Transverse colon (tissue), 4 donors: ENCODE measurements at regions of chr2 and their contacts with region 1.

Region 1: DNA sequence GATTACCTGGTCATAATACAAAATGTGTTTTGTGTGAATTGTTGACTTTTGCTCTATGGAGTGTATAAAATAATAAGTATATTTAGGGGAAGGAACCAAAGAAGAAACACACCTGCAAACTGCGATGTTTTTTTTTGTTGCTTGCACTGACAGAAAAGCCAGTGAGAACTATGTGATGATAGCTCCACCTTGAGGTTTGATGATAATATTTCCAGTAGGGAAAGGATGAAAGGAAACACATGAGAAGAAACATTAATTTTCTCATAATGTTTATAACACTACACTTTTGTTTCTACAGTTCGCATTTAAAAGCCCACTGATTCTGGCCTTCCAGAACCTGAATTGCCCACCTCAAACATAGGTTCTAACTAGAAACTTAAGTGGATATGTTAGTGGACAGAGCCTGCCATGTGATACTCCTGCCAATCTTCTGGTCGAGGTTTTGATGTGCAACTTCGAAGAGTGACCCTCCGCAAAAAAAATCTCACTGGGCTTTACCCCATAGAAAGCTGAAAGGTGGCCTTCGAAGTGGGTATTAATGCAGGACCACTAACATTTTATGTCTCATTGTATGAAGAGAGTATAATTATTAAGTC is 476.4 kb upstream of the SPHKAP start:
- DNase-seq: no peak
- H3K4me3 ChIP-seq: no peak overlapping the region
- H3K27ac ChIP-seq: no peak overlapping the region
- H3K4me1 ChIP-seq: no peaks in the 10 kb centered on the region
- H3K27me3 ChIP-seq: no peaks in the 10 kb centered on the region
- CTCF ChIP-seq: peak; percentile 34 to 60 (median 42)
- EP300 ChIP-seq: no peak
- POLR2A ChIP-seq: no peak

Region 2: DNA sequence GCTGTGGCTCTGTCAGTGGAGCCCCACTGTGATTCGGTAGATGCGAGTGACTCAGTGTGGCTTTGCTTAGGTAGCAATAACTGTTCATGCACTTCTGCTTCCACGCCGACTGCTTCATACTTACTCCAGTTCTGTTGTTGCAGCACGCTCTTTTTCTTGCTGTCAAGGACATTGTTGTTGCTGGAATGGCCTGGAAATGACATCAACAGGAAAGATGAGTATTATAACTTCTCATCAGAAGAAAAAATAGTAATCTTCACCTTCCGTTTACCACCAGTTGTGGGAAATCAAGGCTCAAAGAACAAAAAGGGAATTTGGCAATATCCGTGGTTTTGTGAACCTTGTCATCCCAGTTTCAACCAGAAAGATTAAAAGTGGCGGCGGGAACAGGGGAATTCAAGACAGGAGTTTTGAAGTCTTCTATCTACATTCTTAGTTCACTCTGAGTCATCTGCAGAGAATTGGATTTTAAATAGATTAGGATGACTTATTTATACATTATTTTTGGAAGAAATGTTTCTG is 1287.1 kb before region 1 on chr2:
- in situ Hi-C with region 1: no loop called
- intact Hi-C with region 1: no loop called
- DNase-seq: no peak
- H3K4me3 ChIP-seq: no peak overlapping the region
- H3K27ac ChIP-seq: no peak overlapping the region
- H3K4me1 ChIP-seq: no peaks in the 10 kb centered on the region
- H3K27me3 ChIP-seq: no peaks in the 10 kb centered on the region
- CTCF ChIP-seq: no peak
- EP300 ChIP-seq: no peak
- POLR2A ChIP-seq: no peak

Region 3: GRCh38 chr2:227884511-227884947 is 773.4 kb before region 1 on chr2:
- in situ Hi-C with region 1: loop called in 1 of 4 experiments (anchors 25 kb)
- intact Hi-C with region 1: no loop called
- DNase-seq: peak; percentile 85
- H3K4me3 ChIP-seq: no peak overlapping the region
- H3K27ac ChIP-seq: no peak overlapping the region
- H3K4me1 ChIP-seq: no peaks in the 10 kb centered on the region
- H3K27me3 ChIP-seq: no peaks in the 10 kb centered on the region
- CTCF ChIP-seq: peak; percentile 66 to 86 (median 72)
- EP300 ChIP-seq: no peak
- POLR2A ChIP-seq: no peak

Region 4: DNA sequence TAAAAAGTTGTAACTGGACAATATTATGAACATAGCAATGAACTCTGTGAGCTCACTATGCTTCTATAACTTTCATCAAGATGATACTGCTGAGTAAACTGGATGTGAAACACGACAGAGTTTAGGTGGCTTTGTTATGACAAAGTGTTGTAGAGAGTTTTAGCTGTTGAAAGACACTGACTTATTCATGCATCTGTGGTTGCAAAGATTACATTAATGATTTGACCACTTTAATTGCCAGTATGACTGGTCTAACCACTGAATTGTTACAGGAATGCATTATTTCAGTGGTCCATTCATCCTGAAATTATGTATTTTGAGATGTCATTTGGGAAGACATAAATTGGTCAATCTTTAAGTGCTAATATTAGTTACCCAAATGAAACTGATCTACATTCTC is 594.3 kb before region 1 on chr2:
- in situ Hi-C with region 1: loop called in 1 of 4 experiments (anchors 25 kb)
- intact Hi-C with region 1: no loop called
- DNase-seq: no peak
- H3K4me3 ChIP-seq: no peak overlapping the region
- H3K27ac ChIP-seq: no peak overlapping the region
- H3K4me1 ChIP-seq: no peaks in the 10 kb centered on the region
- H3K27me3 ChIP-seq: no peaks in the 10 kb centered on the region
- CTCF ChIP-seq: no peak
- EP300 ChIP-seq: no peak
- POLR2A ChIP-seq: no peak

Region 5: DNA sequence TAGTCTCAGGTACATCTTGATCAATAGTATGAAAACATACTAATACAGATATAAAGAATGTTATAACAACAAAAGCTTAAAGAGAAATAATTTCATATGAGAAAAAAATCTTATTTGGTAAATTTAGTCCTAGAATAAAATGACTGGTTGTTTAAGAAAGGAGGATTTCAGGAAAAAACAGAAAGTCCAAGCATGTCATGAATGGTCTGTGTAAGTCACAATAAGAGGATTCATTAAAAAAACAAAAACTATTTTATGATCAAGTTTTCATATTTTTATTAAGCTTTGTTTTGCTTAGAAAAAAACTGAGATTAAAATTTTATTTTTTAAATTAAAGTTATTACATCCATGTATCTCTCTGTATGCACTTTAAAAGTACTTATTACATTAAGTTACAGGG is 122.5 kb before region 1 on chr2:
- in situ Hi-C with region 1: no loop called
- intact Hi-C with region 1: no loop called
- DNase-seq: no peak
- H3K4me3 ChIP-seq: no peak overlapping the region
- H3K27ac ChIP-seq: no peak overlapping the region
- H3K4me1 ChIP-seq: no peaks in the 10 kb centered on the region
- H3K27me3 ChIP-seq: no peaks in the 10 kb centered on the region
- CTCF ChIP-seq: no peak
- EP300 ChIP-seq: no peak
- POLR2A ChIP-seq: no peak